ENCODE measurements at regions of chr1 and their contacts with region 1.

Region 1: DNA sequence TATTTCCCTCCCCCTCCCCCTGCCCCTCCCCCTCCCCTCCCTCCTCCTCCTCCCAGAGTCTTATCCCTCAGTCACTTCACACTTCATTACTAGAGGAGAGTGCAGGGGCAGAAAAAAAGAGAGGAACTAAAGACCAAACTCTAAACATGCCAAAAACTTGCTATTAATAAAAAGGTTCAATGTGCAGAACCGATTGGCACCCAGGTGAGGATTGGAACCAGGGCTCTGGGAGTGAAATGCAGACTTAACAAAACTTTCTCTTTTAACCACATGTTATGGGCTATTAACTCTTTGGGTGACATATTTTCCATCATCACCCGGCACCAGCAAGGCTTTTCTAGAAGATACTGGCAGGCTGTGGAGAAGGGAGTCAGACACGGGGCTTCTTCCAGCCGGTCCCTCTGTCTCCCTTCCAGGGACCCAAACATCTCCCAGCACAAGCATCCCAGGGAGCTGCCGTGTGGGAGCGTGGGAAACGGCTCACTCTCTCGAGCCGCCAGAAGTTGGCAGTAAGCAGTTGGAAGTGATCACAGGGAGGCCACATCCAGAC is 13.6 kb downstream of the NID1 start:
- DNase-seq: peak; percentile 55
- ATAC-seq: peak; percentile 66
- H3K4me3 ChIP-seq: no peak overlapping the region
- H3K27ac ChIP-seq: no peak overlapping the region
- H3K4me1 ChIP-seq: peaks cover 11% of the 10 kb centered on the region
- H3K27me3 ChIP-seq: no peaks in the 10 kb centered on the region
- CTCF ChIP-seq: no peak
- POLR2A ChIP-seq: no peak
- RAD21 ChIP-seq: no peak

Region 2: GRCh38 chr1:235491644-235492043 is 559.7 kb before region 1 on chr1:
- CTCF ChIA-PET with region 1: no interaction called
- POLR2A ChIA-PET with region 1: no interaction called
- dilution Hi-C with region 1: no loop called
- in situ Hi-C with region 1: no loop called
- intact Hi-C with region 1: loop called (anchors 5 kb)
- DNase-seq: no peak
- ATAC-seq: no peak
- H3K4me3 ChIP-seq: no peak overlapping the region
- H3K27ac ChIP-seq: no peak overlapping the region
- H3K4me1 ChIP-seq: no peaks in the 10 kb centered on the region
- H3K27me3 ChIP-seq: no peaks in the 10 kb centered on the region
- CTCF ChIP-seq: no peak
- POLR2A ChIP-seq: no peak
- RAD21 ChIP-seq: no peak

Region 3: GRCh38 chr1:237071641-237072420 is 1020.5 kb after region 1 on chr1:
- CTCF ChIA-PET with region 1: no interaction called
- POLR2A ChIA-PET with region 1: no interaction called
- dilution Hi-C with region 1: no loop called
- in situ Hi-C with region 1: no loop called
- intact Hi-C with region 1: no loop called
- DNase-seq: no peak
- ATAC-seq: no peak
- H3K4me3 ChIP-seq: no peak overlapping the region
- H3K27ac ChIP-seq: no peak overlapping the region
- H3K4me1 ChIP-seq: no peaks in the 10 kb centered on the region
- H3K27me3 ChIP-seq: no peaks in the 10 kb centered on the region
- CTCF ChIP-seq: no peak
- POLR2A ChIP-seq: no peak
- RAD21 ChIP-seq: no peak

Measured in IMR-90 (cell line).